ENCODE measurements at regions of chr6 and their contacts with region 1.

Region 1: DNA sequence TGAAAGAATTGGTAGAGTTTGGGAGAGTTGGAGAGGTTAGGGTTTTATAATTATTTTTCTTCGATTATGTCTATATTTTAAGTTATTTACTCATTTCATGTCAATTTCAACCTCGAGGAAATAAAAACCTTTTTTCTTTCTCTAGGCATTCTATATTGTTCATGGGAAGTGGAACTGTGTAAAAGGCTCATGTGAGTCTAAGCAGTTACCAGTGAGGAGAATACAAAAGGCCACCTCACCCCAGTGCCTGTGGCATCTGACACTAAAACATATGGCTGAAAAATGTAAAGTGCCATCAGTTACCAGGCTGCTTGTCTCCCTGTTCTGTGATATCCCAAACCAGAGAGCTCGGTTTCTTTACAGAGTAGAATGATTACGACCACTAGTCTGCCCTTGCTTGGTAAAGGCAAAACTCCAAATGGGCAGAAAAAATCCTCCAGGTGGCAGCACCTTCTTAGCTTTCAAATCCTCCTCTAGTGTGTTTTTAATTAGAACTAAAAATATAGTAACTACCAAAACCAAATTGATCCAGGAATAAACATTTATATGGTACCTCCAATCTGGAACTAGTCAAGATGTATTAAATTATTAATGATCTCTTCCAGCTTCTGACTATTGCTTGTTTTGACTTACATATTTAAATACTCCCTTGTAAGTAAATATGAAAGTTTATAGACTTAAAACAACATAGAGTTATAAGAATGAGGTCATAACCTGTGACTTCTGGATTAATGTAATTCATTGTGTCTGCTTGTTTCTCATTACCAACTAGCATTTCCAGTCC is 122.6 kb upstream of the MCHR2 start:
- DNase-seq: peak in 2 of 6 donors; percentile 14 to 51
- ATAC-seq: peak; percentile 61 to 84 (median 74)
- H3K4me3 ChIP-seq: no peak overlapping the region
- H3K27ac ChIP-seq: no peak overlapping the region
- H3K4me1 ChIP-seq: no peaks in the 10 kb centered on the region
- H3K27me3 ChIP-seq: no peaks in the 10 kb centered on the region
- CTCF ChIP-seq: peak; percentile 21 to 60 (median 50)

Region 2: DNA sequence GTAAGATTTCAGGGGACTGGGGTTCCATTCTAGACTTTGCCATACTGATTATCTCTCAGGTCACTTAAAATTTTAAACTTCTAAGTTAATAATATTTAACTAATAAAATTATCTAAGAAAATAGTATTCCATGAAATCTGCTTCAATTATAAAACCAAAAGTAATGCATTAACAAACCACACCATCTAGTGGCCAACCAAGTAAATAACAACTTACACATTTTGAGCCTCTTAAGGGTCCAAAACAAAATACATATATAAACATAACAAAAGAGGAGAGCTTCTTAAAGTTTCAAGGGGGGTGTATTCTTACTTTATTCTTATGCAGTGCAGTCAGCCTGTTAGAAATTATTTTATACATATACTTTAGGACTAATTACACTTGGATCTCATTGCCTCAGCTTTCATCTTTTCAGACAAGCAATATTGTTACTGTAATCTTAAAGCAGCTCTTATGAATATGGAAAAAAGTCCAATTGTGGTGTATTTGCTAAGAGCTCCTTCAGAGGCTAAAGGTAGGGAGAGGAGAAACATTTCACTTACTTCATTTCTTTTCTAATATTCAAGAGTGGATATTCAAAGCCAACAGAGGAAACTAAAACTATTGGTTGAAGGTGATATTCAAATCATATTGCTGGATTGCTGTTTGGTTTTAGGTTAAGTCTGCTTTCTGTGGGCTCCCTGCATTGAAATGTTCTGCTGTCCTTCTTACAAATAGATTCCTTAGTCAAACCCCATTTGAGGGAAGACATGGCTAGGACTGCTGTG is 547.9 kb after region 1 on chr6:
- intact Hi-C with region 1: loop called in 2 of 3 experiments (anchors 10 kb)
- DNase-seq: no peak
- ATAC-seq: peak in 3 of 4 donors; percentile 60 to 80 (median 76)
- H3K4me3 ChIP-seq: no peak overlapping the region
- H3K27ac ChIP-seq: no peak overlapping the region
- H3K4me1 ChIP-seq: peaks cover 0 to 10% (median 8%) of the 10 kb centered on the region in 3 donors
- H3K27me3 ChIP-seq: no peaks in the 10 kb centered on the region
- CTCF ChIP-seq: peak in 3 of 4 donors; percentile 49 to 61 (median 56)

Measured in pancreas (tissue), 10 donors.